ENCODE measurements at regions of chr7 and their contacts with region 1.

Region 1: GRCh38 chr7:55432939-55433784 is 68.0 kb downstream of the LANCL2 start:
- DNase-seq: peak; percentile 34
- ATAC-seq: no peak
- H3K4me3 Mint-ChIP-seq: no peak overlapping the region
- H3K27ac Mint-ChIP-seq: no peak overlapping the region
- H3K4me1 Mint-ChIP-seq: peaks cover 2% of the 10 kb centered on the region
- H3K27me3 Mint-ChIP-seq: no peaks in the 10 kb centered on the region

Region 2: DNA sequence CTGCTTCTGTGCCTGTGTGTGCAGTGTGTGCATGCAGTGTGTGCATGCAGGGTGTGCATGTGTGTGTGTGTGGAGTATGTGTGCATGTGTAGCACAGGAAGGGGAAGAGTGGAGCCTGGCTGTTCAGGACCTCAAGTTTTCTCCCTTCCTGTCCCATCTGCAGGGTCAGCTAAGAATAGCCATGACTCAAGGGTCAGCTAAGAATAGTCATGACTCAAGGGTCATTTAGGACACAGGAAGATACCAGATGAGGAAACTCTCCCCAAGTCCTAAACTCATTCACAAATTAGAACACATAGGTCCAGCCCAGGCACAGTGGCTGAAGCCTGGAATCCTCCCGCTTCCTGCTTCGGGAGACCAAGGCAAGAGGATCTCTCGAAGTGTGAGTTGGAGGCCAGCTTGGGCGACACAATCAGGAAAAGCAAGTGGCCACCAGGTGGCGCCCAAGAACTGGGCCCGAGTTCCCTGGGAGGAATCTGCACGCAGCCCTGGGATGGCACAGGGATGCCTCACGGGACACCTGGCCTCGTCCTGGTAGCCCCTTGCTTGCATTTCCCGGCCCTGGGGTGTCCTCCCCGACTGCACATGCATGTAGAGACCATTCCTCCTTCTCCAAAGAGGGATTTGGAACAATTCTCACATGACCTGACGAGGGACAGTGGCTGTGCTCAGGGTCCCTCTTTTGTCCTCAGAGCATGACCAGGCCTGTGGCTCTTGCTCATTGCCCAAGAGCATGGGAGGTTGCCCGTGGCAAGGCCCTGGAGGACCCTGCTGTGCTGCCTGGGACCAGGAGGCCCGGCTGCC is 160.6 kb after region 1 on chr7:
- CTCF ChIA-PET with region 1: interaction called, 26 read pairs
- POLR2A ChIA-PET with region 1: no interaction called
- DNase-seq: peak; percentile 72
- ATAC-seq: peak; percentile 65
- H3K4me3 Mint-ChIP-seq: no peak overlapping the region
- H3K27ac Mint-ChIP-seq: no peak overlapping the region
- H3K4me1 Mint-ChIP-seq: no peaks in the 10 kb centered on the region
- H3K27me3 Mint-ChIP-seq: no peaks in the 10 kb centered on the region